ENCODE measurements at regions of chr12 and their contacts with region 1.

Region 1: DNA sequence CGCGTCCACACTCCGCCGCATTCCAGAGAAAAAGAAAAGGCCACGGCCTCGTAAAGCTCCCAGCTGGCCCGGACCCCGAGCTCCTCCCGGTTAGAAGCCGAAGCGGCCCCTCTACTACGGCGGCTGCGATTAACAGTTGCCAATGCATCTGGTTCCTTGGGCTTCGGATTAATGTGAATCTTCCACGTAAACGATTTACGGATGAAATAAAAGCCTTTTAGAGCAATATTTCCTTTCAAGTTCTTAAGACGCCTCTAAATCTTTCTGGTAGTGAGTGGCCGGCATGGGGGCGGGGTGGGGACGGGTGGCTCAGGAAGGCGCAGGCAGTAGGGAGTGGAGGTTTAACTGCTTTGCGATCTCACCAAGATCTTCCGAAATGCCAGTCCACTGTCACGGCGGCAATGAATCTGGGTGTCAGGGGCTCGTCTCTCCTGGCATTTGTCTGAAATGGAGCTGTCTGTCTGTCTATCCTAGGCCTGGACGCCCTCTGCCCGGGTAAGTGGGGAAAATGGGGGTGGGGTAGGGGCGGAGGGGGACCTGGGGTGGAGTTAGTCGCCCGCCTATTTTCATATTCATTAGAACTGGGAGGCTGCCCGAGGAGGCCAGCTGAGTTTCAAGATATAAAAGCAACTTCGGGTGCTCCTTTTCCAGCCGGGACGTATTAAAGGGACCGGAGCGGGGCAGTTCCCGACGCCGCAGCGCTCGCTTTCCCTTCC is 413 bp upstream of the ALX1 start:
- DNase-seq: no peak
- H3K4me3 Mint-ChIP-seq: no peak overlapping the region
- H3K27ac Mint-ChIP-seq: no peak overlapping the region
- H3K4me1 Mint-ChIP-seq: peaks cover 8% of the 10 kb centered on the region
- H3K27me3 Mint-ChIP-seq: peaks cover 67% of the 10 kb centered on the region

Region 2: DNA sequence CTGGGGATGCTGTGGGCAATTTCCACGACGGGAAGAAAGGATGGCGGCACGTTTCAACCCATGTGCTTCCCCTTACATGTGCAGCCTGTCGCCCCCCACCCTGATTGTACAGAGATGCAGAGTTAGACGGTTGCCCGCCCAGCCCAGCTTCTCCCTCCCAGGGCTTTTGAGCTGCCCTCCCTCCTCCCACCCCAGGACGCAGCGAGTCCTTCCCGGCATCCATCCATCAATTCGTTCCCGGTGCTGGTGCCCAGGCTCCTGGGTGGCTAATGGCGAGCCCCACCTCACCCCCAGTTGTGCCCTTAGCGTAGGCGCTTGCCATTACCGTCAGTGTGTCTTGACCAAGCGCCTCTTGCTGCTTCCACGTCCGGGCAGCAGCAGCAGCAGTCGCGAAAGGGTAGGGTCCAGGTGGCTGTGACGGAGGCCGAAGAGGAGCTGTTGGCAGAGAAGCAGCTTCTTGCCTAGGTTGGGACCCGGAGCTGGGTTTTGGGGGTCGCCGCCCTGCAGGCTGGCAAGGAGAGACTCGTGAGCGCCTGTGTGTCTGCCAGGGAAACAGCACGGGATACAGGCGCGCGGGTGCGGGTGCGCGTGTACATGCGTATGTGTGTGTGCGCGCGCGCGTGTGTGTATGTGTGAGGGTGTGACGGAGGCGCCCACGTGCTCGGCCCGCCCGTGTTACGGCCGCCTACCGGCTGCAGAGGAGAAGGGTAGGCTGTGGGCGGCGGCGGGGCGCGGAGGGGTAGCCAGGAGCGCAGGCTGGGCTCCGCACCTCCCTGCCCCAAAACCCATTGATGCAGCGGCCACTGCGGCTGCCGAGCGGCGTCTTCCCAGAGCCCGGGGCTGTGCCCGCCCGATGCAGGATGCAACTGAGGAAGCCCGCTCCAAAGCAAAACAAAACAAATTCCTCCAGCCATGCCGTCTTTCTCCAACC is 367.1 kb before region 1 on chr12 and contains the start of gene SLC6A15:
- intact Hi-C with region 1: loop called (anchors 5 kb)
- DNase-seq: no peak
- H3K4me3 Mint-ChIP-seq: peak within 1 kb of the TSS; percentile 75
- H3K27ac Mint-ChIP-seq: no peak within 1 kb of the TSS
- H3K4me1 Mint-ChIP-seq: peaks cover 10% of the 10 kb centered on the region
- H3K27me3 Mint-ChIP-seq: peaks cover 37% of the 10 kb centered on the region
- total RNA-seq, gene SLC6A15: not detected in 2 replicates

Region 3: DNA sequence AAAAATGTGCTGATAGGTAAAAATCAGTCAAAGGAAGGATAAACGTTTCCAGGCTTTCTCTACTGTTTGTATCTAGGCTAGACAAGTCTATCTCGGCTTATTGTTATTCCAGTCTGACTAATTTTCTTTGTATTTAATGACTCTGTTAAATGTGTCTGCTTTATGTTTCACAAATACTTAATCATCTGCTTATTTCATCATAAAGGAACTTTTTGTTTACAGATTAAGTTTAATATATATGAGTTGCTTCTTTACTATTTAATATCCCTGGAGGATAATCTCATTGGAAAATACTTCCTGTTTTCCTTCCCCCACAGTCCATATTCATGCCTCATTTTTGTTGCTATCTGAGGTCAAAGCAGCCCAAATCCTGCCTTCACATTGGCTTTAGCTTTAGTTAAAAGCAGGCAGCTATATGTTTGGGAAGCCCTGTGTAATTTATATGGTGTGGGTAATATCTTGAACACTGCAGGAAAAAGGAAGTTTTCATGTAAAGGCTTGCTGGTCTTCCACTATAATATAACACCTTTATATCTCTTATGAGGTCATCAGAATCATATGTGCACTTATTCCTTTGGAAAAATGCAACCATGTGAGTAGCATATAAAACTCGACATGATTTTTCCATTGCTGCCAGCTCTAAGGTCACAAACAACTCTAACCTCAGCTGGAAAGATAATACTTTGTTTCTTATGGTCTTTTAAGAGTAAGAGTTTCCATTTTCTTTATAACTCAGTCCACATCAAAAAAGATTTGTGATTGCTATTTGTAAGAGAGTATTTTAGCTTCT is 77.2 kb after region 1 on chr12:
- intact Hi-C with region 1: no loop called
- DNase-seq: no peak
- H3K4me3 Mint-ChIP-seq: no peak overlapping the region
- H3K27ac Mint-ChIP-seq: no peak overlapping the region
- H3K4me1 Mint-ChIP-seq: no peaks in the 10 kb centered on the region
- H3K27me3 Mint-ChIP-seq: no peaks in the 10 kb centered on the region

Measured in activated T-helper 2 cell treated with anti-CD3 and anti-CD28 coated beads, Interferon-gamma antibody, Interleukin-2, Interleukin-4, amounts not matched to agents 10 μg/mL and 5 μg/mL and 100 μg/mL, durations not matched to agents 14 hours and 24 hours and 36 hours (primary cell).